Caco-2 (cell line): ENCODE measurements at regions of chr3 and their contacts with region 1.

Region 1: DNA sequence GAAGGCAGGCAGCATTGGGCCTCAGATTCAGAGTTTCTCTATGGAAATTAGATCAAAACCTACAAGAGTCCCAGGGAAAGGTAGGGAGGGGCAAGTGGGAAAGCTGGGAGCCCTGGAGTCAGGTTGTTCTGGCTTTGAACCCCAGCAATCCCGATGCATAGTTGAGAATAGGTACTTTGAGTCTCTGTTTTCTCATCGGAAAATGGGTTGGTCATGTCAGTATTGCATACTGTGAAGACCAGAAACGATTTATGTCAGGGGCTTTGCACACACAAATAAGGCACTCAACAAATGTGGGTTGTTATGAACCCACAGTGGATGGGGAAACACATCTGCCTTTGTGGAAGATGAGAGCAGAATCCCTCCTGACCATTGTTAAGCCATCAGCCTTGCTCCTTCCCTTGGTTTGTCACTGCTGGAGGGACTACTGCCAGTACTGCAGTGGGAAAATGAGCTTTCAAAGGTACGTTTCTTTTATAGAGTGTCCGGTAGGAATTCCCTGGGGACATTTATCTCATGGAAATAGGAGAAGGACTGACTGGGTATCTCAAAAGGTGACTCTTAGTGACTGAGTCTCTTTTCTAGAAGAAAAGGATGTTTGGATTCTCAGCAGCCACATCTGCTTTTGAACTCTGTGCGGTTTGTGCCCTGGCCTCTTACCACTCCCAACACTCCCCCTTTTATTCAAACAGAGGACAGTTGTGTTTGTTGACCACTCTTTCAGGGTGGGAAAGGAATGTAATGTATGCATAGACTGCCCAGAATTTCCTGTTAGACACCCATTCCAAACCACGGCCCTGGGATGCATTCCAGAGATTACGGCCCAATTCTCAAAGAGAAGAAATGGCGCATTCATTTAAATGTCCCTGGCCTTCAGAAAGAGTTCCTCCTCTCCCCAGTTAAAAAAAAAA is 54.6 kb upstream of the VILL start:
- DNase-seq: peak; percentile 77 to 84
- H3K4me3 ChIP-seq: no peak overlapping the region
- H3K4me3 Mint-ChIP-seq: peak overlapping the region; percentile 28
- H3K27ac Mint-ChIP-seq: peak overlapping the region; percentile 91
- H3K4me1 ChIP-seq: peaks cover 45% of the 10 kb centered on the region
- H3K4me1 Mint-ChIP-seq: peaks cover 41% of the 10 kb centered on the region
- H3K27me3 ChIP-seq: no peaks in the 10 kb centered on the region
- H3K27me3 Mint-ChIP-seq: no peaks in the 10 kb centered on the region
- CTCF ChIP-seq: no peak

Region 2: GRCh38 chr3:37904601-37905000 is 31.4 kb before region 1 on chr3:
- CTCF ChIA-PET with region 1: no interaction called
- POLR2A ChIA-PET with region 1: no interaction called
- intact Hi-C with region 1: loop called (anchors 5 kb)
- DNase-seq: no peak
- H3K4me3 ChIP-seq: no peak overlapping the region
- H3K4me3 Mint-ChIP-seq: no peak overlapping the region
- H3K27ac Mint-ChIP-seq: peak overlapping the region; percentile 18
- H3K4me1 ChIP-seq: peaks cover 45% of the 10 kb centered on the region
- H3K4me1 Mint-ChIP-seq: peaks cover 29% of the 10 kb centered on the region
- H3K27me3 ChIP-seq: no peaks in the 10 kb centered on the region
- H3K27me3 Mint-ChIP-seq: no peaks in the 10 kb centered on the region
- CTCF ChIP-seq: no peak

Region 3: DNA sequence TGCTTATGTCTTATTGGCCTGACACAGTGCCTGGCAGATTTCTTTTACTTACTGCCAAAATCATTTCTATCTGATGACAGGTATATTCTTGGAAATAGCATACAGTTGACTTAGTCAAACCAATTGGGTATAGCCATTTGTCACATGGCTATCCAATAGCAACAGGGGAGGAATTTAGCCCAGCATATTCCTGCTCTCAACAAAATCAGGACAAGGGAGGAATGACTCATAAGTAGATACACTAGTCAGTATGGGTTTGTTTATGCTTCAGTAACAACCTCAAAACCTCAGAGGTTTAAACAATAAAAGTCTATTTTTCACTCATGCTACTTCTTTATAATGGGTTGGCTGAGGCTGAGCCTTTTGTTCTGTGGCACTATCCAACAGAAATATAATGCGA is 16.6 kb after region 1 on chr3:
- CTCF ChIA-PET with region 1: no interaction called
- POLR2A ChIA-PET with region 1: no interaction called
- intact Hi-C with region 1: no loop called
- DNase-seq: no peak
- H3K4me3 ChIP-seq: no peak overlapping the region
- H3K4me3 Mint-ChIP-seq: no peak overlapping the region
- H3K27ac Mint-ChIP-seq: no peak overlapping the region
- H3K4me1 ChIP-seq: no peaks in the 10 kb centered on the region
- H3K4me1 Mint-ChIP-seq: peaks cover 14% of the 10 kb centered on the region
- H3K27me3 ChIP-seq: no peaks in the 10 kb centered on the region
- H3K27me3 Mint-ChIP-seq: no peaks in the 10 kb centered on the region
- CTCF ChIP-seq: no peak